ENCODE measurements at regions of chr3 and their contacts with region 1.

Region 1: GRCh38 chr3:70358978-70359580 is 46.6 kb upstream of the MDFIC2 start:
- DNase-seq: no peak
- H3K4me3 ChIP-seq: no peak overlapping the region
- H3K27ac ChIP-seq: no peak overlapping the region
- H3K4me1 ChIP-seq: no peaks in the 10 kb centered on the region
- H3K27me3 ChIP-seq: no peaks in the 10 kb centered on the region
- CTCF ChIP-seq: peak in 3 of 4 experiments; percentile 44 to 58 (median 56)
- EP300 ChIP-seq: no peak
- POLR2A ChIP-seq: no peak

Region 2: DNA sequence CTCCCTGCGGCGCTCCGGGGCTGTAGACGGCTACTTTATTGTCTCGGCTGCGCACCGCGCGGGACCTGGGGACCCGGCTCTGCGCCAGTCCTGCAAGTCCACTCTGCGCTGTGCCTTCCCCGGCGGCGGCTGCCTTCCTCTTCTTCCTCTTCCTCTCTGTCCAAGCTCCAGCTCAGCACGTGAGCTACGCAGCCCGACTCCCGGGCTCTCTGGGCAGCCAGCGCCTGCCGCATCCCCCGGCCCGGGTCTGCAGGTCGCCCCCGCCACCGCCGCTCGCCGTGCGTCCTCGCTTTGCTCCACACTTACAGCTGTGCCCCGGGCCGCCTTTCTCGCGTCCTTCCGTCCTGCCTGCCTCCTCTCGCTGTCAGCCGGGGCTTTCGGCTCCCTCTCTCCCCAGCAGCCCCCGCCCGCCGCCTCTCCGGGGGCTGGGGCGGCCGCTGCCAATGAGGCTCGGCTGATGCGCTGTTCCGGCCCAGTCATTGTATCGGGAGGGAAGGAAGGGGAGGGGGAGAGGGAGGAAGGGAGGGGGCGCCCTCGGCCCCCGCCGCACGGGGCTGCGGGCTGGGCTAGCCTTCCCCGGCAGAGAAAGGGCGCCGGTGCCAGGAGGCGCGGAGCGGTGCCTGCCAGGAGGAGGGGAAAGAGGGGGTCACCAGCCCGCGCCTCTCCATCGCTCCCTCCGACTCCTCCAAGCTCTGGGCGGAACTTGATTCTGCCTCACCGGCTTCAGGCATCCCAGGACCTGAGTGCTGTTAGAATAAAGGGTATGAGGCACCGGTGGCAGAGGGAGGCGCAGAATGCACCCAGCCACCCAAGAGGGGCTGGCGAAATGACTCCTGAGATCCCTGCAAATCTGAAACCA is 816.6 kb before region 1 on chr3:
- intact Hi-C with region 1: no loop called
- DNase-seq: no peak
- H3K4me3 ChIP-seq: peak overlapping the region; percentile 15 to 46 (median 34)
- H3K27ac ChIP-seq: peak overlapping the region in 1 of 4 donors; percentile 1
- H3K4me1 ChIP-seq: peaks cover 0 to 22% (median 18%) of the 10 kb centered on the region in 4 donors
- H3K27me3 ChIP-seq: peaks cover 0 to 41% (median 18%) of the 10 kb centered on the region in 3 donors
- CTCF ChIP-seq: no peak
- EP300 ChIP-seq: no peak
- POLR2A ChIP-seq: no peak

Region 3: DNA sequence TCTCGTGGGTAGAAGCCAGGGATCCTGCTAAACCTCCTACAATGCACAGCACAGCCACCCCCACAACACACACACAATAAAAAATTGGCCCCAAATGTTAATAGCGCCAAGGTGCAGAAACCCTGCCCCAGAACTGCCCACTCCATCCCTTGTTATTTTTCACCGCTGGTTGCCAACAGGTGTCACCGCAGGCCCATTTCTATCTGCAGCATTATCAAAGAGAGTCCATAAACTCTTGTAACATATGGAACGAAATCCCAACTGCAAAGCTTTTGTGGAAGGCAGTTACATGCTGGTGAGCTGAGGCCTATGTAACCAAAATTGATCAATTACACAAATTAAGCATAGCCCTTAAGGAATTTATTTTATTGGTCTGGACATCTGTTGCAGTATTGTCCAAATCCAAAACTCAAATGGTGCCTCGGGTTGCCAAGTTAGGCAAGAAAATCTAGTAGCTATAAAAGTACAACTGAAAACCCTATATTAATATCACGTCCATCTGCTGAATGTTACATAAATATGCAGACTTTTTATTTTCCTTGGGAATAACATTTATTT is 293.3 kb before region 1 on chr3:
- intact Hi-C with region 1: loop called (anchors 2 kb)
- DNase-seq: no peak
- H3K4me3 ChIP-seq: no peak overlapping the region
- H3K27ac ChIP-seq: peak overlapping the region in 1 of 4 donors; percentile 83
- H3K4me1 ChIP-seq: peaks cover 0 to 6% (median 5%) of the 10 kb centered on the region in 4 donors
- H3K27me3 ChIP-seq: no peaks in the 10 kb centered on the region
- CTCF ChIP-seq: no peak
- EP300 ChIP-seq: no peak
- POLR2A ChIP-seq: no peak

Region 4: DNA sequence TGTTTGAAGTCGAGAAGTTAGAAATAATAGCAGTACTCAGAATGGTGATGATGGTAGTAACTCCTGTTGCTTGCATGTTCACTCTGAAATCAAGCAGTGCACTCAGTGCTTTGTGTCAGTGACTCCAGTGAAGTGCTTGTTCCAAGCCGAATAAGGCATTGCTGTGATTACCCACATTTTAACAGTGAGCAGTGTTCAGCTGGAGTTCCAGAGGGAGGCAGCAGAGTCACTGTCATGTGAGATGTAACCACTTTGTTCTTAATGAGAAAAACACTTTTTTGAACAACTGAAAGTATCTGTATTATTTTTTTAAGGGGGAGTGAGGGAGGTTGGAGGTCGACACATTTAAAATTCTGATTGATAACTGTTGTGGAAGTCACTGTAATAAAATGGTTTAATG is 50.3 kb before region 1 on chr3:
- intact Hi-C with region 1: no loop called
- DNase-seq: no peak
- H3K4me3 ChIP-seq: no peak overlapping the region
- H3K27ac ChIP-seq: no peak overlapping the region
- H3K4me1 ChIP-seq: peaks cover 0 to 13% (median 8%) of the 10 kb centered on the region in 4 donors
- H3K27me3 ChIP-seq: no peaks in the 10 kb centered on the region
- CTCF ChIP-seq: no peak
- EP300 ChIP-seq: no peak
- POLR2A ChIP-seq: no peak

Measured in sigmoid colon (tissue), 7 donors.